ENCODE measurements at regions of chr20 and their contacts with region 1.

Region 1: DNA sequence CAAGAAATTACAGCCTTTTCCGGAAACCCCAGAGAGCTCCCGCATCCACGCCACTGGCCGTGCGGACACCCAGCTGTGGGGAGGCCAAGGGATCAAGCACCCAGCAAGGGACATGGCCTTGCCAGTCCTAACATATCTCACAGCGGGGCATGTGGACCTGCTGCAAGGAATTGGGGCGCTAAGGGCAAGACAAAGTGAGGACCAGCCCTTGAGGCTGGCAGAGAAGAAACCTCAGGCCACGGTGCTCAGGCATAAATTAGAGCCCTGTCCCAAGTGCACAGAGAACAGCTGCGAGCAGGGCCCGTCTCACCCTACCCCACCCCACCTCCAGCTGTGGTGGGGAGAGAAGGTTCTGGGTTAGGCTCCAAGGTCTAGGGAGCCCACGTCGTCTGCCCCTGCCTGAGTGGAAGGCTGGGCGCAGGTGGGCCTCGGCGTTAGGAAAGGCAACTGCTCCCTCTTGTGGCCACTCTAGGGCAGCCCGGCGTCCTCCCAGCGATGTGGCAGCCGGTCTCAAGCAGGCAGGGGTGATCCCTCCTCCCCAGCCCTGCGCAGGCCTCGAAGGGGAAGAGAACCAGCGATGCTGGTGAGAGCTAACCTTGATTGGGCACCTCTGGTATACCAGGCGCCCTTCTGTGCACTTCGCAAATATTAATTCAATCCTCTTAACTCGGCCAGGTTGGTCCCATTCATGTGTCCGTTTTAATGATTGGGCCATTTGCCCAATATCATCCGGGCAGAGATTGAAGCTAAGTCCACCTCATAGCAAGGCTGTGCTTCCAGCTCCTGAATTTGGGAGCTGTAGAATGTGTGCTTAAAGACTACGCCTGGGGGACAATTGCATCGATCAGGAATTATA is 235.8 kb downstream of the NFATC2 start:
- DNase-seq: peak; percentile 45
- ATAC-seq: peak; percentile 100
- H3K4me3 ChIP-seq: no peak overlapping the region
- H3K27ac ChIP-seq: no peak overlapping the region
- H3K4me1 ChIP-seq: no peaks in the 10 kb centered on the region
- H3K27me3 ChIP-seq: no peaks in the 10 kb centered on the region
- CTCF ChIP-seq: peak; percentile 91

Region 2: GRCh38 chr20:51220293-51220706 is 86.4 kb before region 1 on chr20:
- CTCF ChIA-PET with region 1: no interaction called
- POLR2A ChIA-PET with region 1: no interaction called
- in situ Hi-C with region 1: no loop called
- intact Hi-C with region 1: loop called (anchors 5 kb)
- DNase-seq: no peak
- ATAC-seq: peak; percentile 85
- H3K4me3 ChIP-seq: no peak overlapping the region
- H3K27ac ChIP-seq: no peak overlapping the region
- H3K4me1 ChIP-seq: no peaks in the 10 kb centered on the region
- H3K27me3 ChIP-seq: no peaks in the 10 kb centered on the region
- CTCF ChIP-seq: peak; percentile 99

Region 3: GRCh38 chr20:51326201-51326819 is 19.6 kb after region 1 on chr20:
- CTCF ChIA-PET with region 1: interaction called, 10 read pairs
- POLR2A ChIA-PET with region 1: no interaction called
- in situ Hi-C with region 1: no loop called
- intact Hi-C with region 1: no loop called
- DNase-seq: no peak
- ATAC-seq: peak; percentile 55; the same call in 1 of the 2 replicates
- H3K4me3 ChIP-seq: no peak overlapping the region
- H3K27ac ChIP-seq: no peak overlapping the region
- H3K4me1 ChIP-seq: no peaks in the 10 kb centered on the region
- H3K27me3 ChIP-seq: no peaks in the 10 kb centered on the region
- CTCF ChIP-seq: peak; percentile 70; the same call in 1 of the 2 replicates

Region 4: DNA sequence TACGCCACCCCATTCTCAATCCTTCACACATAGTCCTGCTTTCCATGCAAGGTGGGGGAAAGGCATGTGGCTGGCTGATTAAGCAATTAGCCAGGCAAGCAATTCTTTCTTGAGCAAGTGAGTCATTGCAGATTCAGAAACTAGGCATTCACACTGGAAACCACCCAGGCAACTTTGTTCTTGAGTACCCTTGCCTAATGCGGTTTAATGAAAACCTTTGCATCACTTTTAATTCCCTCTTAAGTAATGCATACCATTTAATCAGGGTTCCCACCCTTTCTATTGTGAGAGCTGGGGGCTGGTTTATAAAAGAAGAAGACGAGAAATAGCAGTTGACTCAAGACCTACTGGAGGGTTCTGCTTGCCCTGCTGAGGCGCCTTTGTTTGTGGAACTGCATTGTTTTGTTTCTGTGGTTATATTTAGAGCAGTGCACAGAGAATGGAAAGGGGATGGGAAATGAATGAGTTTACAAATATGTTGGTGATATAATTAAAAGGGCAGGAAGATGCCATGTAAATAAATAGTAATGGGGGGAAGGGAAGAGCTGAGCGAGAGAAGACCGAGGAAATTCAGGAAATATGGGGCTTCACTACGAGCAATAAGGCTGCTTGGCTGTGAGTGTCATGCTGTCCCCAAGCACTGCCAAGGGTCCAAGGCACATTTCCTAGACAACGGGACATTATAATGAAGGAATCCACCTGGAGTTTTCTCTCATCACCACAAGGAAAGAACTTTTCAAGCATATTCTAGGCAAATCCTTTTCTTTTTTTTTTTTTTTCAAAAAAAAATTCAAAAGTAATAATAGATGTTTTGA is 1616.6 kb after region 1 on chr20:
- CTCF ChIA-PET with region 1: no interaction called
- POLR2A ChIA-PET with region 1: no interaction called
- in situ Hi-C with region 1: no loop called
- intact Hi-C with region 1: no loop called
- DNase-seq: peak; percentile 45
- ATAC-seq: peak; percentile 42
- H3K4me3 ChIP-seq: no peak overlapping the region
- H3K27ac ChIP-seq: no peak overlapping the region
- H3K4me1 ChIP-seq: no peaks in the 10 kb centered on the region
- H3K27me3 ChIP-seq: no peaks in the 10 kb centered on the region
- CTCF ChIP-seq: no peak

Measured in Panc1 (cell line).